Prostate gland (tissue), 2 donors: ENCODE measurements at regions of chr18 and their contacts with region 1.

Region 1: GRCh38 chr18:35352778-35353177 is 8.6 kb upstream of the ZNF24 start:
- DNase-seq: no peak
- H3K4me3 ChIP-seq: no peak overlapping the region
- H3K27ac ChIP-seq: no peak overlapping the region
- H3K4me1 ChIP-seq: no peaks in the 10 kb centered on the region
- H3K27me3 ChIP-seq: no peaks in the 10 kb centered on the region
- CTCF ChIP-seq: no peak
- POLR2A ChIP-seq: no peak

Region 2: DNA sequence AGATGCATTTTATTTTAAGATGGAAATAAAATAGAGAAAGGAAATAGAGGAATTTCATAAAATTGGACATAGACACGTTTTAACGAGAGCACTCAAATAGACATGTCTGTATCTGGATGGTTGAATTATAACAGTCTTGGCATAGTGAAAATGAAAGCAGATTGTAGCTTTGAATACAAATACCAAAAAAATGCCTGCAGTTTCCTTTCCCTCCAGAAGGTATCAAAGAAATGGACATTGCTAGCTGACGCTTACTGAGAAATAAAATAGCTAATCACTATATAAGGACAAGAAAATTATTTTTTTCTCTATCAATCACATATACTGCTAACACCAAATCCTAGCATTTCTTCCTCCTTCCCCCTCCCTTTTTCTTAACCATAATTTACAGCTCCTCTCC is 323.0 kb before region 1 on chr18:
- intact Hi-C with region 1: loop called (anchors 5 kb)
- DNase-seq: no peak
- H3K4me3 ChIP-seq: no peak overlapping the region
- H3K27ac ChIP-seq: peak overlapping the region in 1 of 2 donors; percentile 8
- H3K4me1 ChIP-seq: no peaks in the 10 kb centered on the region
- H3K27me3 ChIP-seq: no peaks in the 10 kb centered on the region
- CTCF ChIP-seq: no peak
- POLR2A ChIP-seq: no peak

Region 3: GRCh38 chr18:35231052-35231451 is 121.7 kb before region 1 on chr18:
- intact Hi-C with region 1: loop called (anchors 5 kb)
- DNase-seq: peak; percentile 78
- H3K4me3 ChIP-seq: no peak overlapping the region
- H3K27ac ChIP-seq: no peak overlapping the region
- H3K4me1 ChIP-seq: no peaks in the 10 kb centered on the region
- H3K27me3 ChIP-seq: no peaks in the 10 kb centered on the region
- CTCF ChIP-seq: peak; percentile 79 to 90 (median 86)
- POLR2A ChIP-seq: no peak

Region 4: DNA sequence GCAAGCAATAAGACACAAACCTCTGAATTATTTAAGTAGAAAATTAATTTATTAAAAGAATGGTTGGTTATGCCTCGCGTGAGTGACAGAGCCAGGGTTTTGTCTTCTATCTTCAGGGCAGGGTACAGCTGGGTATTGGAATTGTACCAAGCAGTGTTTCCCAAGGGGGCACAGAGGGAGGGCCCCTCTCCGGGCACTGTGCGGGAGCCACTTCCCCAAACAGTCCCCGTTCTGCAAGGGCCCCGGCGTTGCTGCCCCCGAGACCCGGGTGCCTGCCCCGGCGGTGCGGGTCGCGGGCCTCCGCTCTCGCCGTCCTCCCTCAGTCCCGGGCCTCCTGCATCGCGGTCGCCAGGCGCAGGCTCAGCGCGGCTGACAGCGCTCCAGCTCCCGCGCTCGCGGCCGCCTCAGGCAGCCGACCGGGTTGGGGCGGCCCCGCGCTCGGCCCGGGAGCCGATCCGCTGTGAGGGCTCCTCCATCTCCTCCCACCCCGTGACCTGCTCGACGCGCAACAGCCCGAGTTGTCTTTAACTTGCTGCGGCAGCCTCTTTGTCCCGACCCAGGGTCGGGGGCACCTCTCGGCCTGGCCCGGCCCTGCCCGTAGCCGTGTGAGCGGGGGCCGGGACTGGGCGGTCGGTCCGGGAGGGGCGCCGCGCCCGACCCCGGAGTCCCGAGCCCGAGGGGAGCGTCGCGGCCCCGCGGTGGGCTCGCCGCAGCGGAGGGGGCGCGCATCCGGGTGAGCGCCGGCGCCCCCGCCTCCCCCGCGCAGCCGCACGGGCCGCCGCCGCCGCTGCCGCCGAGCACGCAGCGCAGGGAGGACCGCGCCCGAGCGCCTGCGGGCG is 228.1 kb after region 1 on chr18:
- intact Hi-C with region 1: no loop called
- DNase-seq: peak; percentile 46
- H3K4me3 ChIP-seq: peak overlapping the region; percentile 63 to 81
- H3K27ac ChIP-seq: peak overlapping the region; percentile 85 to 92
- H3K4me1 ChIP-seq: peaks cover 5% of the 10 kb centered on the region
- H3K27me3 ChIP-seq: no peaks in the 10 kb centered on the region
- CTCF ChIP-seq: no peak
- POLR2A ChIP-seq: peak; percentile 11